ENCODE measurements at regions of chr3 and their contacts with region 1.

Region 1: DNA sequence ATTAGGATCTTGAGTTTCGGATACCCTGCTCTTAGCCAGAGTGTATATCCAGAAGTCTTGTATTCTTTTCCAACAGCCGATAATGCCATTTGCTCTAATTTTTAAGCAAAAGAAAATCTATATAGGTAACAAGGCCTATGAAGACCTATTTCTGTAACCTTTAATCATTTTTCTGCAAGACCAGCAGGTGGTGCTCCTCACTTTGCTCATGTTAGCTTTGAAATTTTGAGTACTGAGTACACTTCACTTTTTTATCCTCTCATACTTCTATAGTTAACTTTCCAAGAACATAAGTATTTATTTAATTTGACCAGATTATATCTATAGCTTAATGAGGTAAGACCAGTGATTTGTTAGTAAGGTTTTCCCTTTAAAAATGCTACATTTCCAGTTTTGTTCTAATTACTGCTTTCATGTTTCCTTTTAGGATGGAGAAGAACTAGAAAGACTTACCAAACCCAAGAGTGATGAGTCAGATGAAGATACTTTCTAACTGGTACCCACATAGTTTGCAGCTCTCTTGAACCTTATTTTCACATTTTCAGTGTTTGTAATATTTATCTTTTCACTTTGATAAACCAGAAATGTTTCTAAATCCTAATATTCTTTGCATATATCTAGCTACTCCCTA is 20.5 kb downstream of the SLC35A5 start:
- DNase-seq: peak; percentile 77
- H3K4me3 ChIP-seq: no peak overlapping the region
- H3K27ac ChIP-seq: no peak overlapping the region
- H3K4me1 ChIP-seq: no peaks in the 10 kb centered on the region
- H3K27me3 ChIP-seq: no peaks in the 10 kb centered on the region
- CTCF ChIP-seq: peak; percentile 40 to 46
- POLR2A ChIP-seq: no peak

Region 2: GRCh38 chr3:112568642-112569041 is 13.7 kb before region 1 on chr3:
- CTCF ChIA-PET with region 1: interaction called, 12 read pairs
- POLR2A ChIA-PET with region 1: no interaction called
- dilution Hi-C with region 1: no loop called
- intact Hi-C with region 1: no loop called
- DNase-seq: peak; percentile 31
- H3K4me3 ChIP-seq: no peak overlapping the region
- H3K27ac ChIP-seq: no peak overlapping the region
- H3K4me1 ChIP-seq: peaks cover 18% of the 10 kb centered on the region
- H3K27me3 ChIP-seq: no peaks in the 10 kb centered on the region
- CTCF ChIP-seq: no peak
- POLR2A ChIP-seq: no peak

Region 3: DNA sequence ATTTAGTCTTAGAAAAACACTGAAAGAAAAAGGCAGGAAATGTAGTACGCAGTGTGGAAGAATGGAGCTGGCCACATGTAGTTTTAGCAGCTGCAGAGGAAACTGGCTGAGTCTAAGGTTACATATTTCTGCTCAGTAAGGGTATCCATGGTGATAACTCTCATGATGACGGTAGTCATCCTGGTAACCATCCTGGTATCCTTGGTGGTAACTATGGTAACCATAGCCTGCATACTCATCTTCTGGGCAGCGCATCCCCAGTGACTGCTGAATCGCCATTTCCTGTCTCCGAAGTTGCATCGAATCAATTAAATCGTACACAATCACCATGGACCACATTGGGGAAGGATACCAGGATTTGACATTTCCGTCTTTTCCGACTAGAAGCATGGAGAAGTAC is 22.9 kb after region 1 on chr3:
- CTCF ChIA-PET with region 1: interaction called, 26 read pairs
- POLR2A ChIA-PET with region 1: interaction called, 6 read pairs
- dilution Hi-C with region 1: no loop called
- intact Hi-C with region 1: loop called (anchors 1 kb)
- DNase-seq: peak; percentile 98
- H3K4me3 ChIP-seq: peak overlapping the region in 1 of 3 experiments; percentile 38
- H3K27ac ChIP-seq: peak overlapping the region; percentile 94
- H3K4me1 ChIP-seq: peaks cover 17% of the 10 kb centered on the region
- H3K27me3 ChIP-seq: no peaks in the 10 kb centered on the region
- CTCF ChIP-seq: no peak
- POLR2A ChIP-seq: no peak

Region 4: DNA sequence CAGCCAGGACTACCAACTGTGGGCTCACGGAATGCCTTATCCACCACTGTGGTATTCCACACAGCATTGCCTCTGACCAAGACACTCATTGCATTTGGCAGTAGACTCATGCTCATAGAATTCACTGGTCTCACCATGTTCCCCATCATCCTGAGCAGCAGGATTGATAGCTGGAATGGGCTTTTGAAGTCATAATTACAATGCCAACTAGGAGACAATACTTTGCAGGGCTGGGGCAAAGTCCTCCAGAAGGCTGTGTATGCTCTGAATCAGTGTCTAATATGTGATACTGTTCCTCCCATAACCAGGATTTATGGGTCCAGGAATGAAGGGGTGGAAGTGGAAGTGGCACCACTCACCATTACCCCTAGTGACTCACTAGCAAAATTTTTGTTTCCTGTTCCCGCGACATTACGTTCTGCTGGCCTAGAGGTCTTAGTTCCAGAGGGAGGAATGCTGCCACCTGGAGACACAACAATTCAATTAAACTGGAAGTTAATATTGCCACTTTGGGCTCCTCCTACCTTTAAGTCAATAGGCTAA is 117.1 kb after region 1 on chr3:
- CTCF ChIA-PET with region 1: interaction called, 12 read pairs
- POLR2A ChIA-PET with region 1: no interaction called
- dilution Hi-C with region 1: no loop called
- intact Hi-C with region 1: loop called (anchors 1 kb)
- DNase-seq: peak; percentile 50
- H3K4me3 ChIP-seq: no peak overlapping the region
- H3K27ac ChIP-seq: no peak overlapping the region
- H3K4me1 ChIP-seq: peaks cover 4% of the 10 kb centered on the region
- H3K27me3 ChIP-seq: no peaks in the 10 kb centered on the region
- CTCF ChIP-seq: peak; percentile 14 to 16
- POLR2A ChIP-seq: no peak

Region 5: GRCh38 chr3:112873632-112874031 is 291.3 kb after region 1 on chr3:
- CTCF ChIA-PET with region 1: no interaction called
- POLR2A ChIA-PET with region 1: no interaction called
- dilution Hi-C with region 1: no loop called
- intact Hi-C with region 1: no loop called
- DNase-seq: no peak
- H3K4me3 ChIP-seq: no peak overlapping the region
- H3K27ac ChIP-seq: no peak overlapping the region
- H3K4me1 ChIP-seq: no peaks in the 10 kb centered on the region
- H3K27me3 ChIP-seq: no peaks in the 10 kb centered on the region
- CTCF ChIP-seq: no peak
- POLR2A ChIP-seq: no peak

Region 6: DNA sequence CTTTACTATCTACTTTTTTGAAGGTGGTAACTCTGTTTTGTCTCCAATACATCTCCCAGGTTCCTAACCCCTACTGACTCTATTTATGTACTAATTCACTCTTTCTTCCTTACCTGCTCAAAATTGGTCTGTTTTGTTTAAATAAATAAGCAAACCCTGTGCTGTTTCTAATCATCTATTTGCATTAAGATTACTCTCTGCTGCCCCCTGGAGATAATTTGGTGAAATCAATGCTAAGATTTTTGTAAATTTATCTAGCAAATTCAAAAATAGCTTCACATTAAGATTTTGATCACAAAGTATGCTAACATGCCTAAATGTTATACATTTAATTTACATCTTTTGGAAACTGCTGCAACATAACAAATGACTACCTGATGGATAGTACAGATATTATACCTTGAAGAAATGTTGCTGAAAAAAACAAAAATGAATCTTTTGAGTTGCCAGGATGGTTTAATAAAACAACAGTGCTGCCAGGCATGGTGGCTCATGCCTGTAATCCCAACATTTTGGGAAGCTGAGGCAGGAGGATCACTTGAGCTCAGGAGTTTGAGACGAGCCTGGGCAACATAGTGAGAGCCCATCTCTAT is 397.0 kb after region 1 on chr3:
- CTCF ChIA-PET with region 1: interaction called, 48 read pairs
- POLR2A ChIA-PET with region 1: no interaction called
- dilution Hi-C with region 1: no loop called
- intact Hi-C with region 1: loop called (anchors 1 kb)
- DNase-seq: peak; percentile 48
- H3K4me3 ChIP-seq: no peak overlapping the region
- H3K27ac ChIP-seq: no peak overlapping the region
- H3K4me1 ChIP-seq: no peaks in the 10 kb centered on the region
- H3K27me3 ChIP-seq: peaks cover 3 to 13% of the 10 kb centered on the region in 2 experiments
- CTCF ChIP-seq: peak; percentile 34 to 36
- POLR2A ChIP-seq: no peak

Region 7: DNA sequence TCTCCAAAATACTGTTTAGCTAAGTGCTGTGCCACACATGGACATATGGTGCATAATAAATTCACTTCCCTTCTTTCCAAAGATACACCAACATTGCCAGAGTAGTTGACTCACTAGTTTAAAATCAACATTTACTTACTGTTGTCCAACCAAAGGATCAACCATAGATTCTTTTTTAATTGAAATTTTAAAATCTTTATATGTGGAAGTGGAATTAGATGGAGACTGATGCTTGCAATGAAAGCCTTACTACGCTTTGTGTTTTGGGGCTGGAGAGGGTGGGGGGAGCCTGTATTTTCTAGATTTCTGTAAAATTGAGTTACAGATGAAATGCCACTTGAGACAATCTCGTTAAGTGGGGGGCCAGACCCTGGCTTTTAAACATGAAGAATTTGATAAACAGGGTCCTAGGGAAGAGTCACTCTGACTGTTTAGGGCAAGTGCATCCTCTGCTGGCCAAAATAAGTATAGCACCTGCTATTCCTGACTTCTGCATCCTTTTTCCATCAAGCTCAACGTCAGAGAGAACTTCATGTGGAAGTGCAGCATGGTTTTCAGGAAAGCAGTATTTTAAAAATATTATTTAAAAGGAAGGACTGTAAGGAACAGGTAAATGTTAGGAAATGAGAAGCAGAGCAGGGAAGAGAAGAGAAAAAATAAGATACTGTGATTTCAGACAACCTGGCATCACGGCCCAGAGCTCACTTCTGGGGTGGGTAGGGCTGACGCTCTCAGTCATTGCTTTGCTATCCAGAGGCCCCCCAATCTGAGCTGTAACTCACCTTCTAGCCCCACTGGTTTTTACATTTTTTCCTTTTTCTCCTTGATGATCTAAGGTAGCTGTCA is 705.7 kb after region 1 on chr3:
- CTCF ChIA-PET with region 1: interaction called, 3 read pairs
- POLR2A ChIA-PET with region 1: no interaction called
- dilution Hi-C with region 1: no loop called
- intact Hi-C with region 1: loop called (anchors 10 kb)
- DNase-seq: peak; percentile 75
- H3K4me3 ChIP-seq: no peak overlapping the region
- H3K27ac ChIP-seq: no peak overlapping the region
- H3K4me1 ChIP-seq: peaks cover 8% of the 10 kb centered on the region
- H3K27me3 ChIP-seq: no peaks in the 10 kb centered on the region
- CTCF ChIP-seq: peak; percentile 89 to 95
- POLR2A ChIP-seq: no peak

Measured in endothelial cell of umbilical vein (primary cell).